ENCODE measurements at regions of chr7 and their contacts with region 1.

Region 1: DNA sequence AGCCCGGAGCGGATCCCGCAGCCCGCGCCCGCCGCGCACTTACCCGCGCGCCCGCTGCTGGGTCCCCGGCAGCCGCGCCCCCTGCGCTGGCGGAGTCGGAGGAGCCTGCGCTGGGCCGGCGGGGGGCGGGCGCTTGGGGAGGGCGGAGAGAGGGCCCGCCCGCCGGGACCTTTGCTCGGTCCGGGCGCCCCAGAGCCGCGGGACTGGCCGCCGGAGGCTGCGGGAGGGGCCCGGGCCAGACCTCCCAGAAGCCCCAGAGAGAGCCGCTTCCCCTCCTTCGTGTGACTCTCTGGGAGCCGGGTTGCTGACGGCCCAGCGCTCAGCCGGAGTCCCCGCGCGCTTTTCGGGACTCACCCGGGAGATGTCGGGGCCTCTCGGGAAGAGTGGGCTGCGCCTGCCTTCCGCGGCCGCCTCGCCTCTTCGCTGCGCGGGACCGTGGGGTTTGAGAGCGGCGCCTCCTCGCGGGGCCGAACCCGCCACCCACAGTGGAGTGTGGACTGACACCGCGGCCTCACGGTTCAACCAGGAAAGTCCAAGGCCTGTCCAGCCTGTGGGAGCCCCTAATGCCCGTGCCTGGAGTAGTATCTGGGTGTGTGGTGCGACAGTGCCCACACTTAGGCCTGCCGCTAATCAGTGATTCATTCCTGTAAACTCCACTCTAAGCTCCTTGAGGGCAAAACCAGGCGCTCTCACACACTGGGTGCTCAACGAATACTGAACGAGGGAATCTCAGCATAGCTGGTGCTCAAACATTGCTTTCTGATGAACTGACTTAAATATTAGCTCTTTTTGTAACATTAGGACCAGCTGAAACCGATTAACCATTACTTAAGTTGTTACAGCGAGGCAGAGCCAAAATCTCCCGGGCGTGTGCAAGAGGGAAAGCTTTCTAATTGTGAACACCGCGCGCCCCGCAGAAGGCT is at the start of gene GSDME:
- DNase-seq: no peak
- ATAC-seq: peak; percentile 85
- H3K4me3 ChIP-seq: peak within 1 kb of the TSS; percentile 88
- H3K27ac ChIP-seq: peak within 1 kb of the TSS; percentile 93
- H3K4me1 ChIP-seq: peaks cover 40% of the 10 kb centered on the region
- H3K27me3 ChIP-seq: no peaks in the 10 kb centered on the region
- CTCF ChIP-seq: no peak
- EP300 ChIP-seq: no peak
- POLR2A ChIP-seq: peak; percentile 60; the same call in 1 of the 2 replicates
- RAD21 ChIP-seq: no peak
- polyA plus RNA-seq, gene GSDME: 62.5 to 83.7 TPM

Region 2: DNA sequence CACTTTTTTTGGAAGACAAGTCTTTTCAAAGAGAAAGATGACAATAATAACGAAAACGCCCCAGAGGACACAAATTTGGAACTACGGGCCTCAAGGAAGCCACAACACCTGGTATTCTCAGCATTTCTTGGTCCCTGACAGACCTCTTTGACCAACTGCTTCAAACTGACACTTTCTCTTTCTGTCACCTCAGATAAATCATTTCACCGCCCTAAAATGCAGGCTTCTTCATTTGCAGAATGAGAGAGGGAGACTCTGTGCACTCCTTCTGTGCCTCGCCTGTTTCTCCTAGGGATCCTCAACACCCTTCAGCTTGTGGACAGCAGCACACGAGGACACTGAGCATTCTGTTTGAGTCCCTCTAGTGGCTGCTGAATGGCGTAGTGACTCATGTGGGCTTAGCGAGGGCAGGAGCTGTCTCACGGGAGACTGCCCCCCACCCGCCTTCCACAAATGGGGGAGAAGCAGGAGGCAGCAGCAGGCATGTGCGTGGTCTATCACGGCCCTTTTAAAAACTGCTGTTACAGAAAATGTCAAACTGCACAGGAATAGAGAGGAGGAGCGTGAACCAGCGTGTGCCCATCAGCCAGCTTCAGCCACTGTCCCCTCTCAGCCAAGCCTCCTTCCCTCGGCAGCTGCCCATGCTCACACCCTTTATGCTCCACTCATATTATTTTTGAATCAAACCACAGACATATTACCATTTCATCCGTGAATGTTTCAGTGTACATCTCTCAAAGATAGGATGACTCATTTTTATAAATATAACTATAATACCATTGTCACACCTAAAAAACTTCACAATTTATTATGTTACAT is 41.7 kb before region 1 on chr7:
- CTCF ChIA-PET with region 1: interaction called, 8 read pairs
- POLR2A ChIA-PET with region 1: interaction called, 3 read pairs
- RAD21 ChIA-PET with region 1: interaction called, 4 read pairs
- SMC1A ChIA-PET with region 1: interaction called, 21 read pairs
- in situ Hi-C with region 1: no loop called
- intact Hi-C with region 1: loop called (anchors 2 kb)
- DNase-seq: peak; percentile 61
- ATAC-seq: peak; percentile 70
- H3K4me3 ChIP-seq: no peak overlapping the region; the same call in 1 of the 2 replicates
- H3K27ac ChIP-seq: peak overlapping the region; percentile 77
- H3K4me1 ChIP-seq: peaks cover 67% of the 10 kb centered on the region
- H3K27me3 ChIP-seq: no peaks in the 10 kb centered on the region
- CTCF ChIP-seq: peak; percentile 50 to 74 (median 55)
- EP300 ChIP-seq: peak; percentile 47 to 74; a peak in 3 of 4 replicates
- POLR2A ChIP-seq: peak; percentile 43; the same call in 1 of the 2 replicates
- RAD21 ChIP-seq: 0 out of 2 replicates have a peak, but pooled peaks have one; percentile 18

Region 3: DNA sequence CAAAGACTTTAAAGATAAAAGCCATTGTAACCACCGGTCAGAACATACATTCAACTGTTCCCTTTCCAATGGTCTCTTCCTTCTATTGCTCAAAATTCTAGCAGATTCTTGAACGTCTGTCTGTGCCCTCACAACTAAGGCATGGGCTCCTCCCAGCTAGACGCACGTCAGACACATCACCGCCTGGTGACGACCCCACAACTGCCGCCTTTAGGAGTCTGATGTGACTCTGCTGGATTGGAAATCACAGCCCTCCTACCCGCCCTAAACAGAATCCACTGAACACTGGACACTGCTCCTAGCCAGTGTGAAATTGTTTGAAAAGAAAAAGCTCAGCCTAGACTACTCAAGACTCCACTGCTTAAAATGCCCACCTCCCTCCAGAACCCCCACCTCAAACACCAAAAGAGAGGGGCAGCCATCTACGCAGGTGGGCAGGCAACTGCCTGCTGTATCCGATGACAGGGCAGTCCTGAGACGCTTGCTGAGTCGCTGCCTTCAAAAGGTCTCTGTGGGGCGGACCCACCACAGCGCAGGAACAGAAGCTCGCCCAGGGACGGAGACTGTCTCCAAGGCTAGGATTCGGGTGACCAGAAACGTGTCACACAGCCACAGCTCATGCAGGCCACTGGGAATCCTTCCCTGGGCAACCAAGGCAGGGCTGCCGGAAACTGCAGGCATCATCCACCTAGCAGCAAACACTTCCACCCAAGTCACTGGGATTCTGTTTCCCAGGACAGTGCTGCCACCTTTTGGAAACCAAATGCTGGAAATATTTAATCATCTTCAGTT is 35.0 kb before region 1 on chr7:
- CTCF ChIA-PET with region 1: interaction called, 6 read pairs
- POLR2A ChIA-PET with region 1: no interaction called
- RAD21 ChIA-PET with region 1: interaction called, 4 read pairs
- SMC1A ChIA-PET with region 1: interaction called, 21 read pairs
- in situ Hi-C with region 1: no loop called
- intact Hi-C with region 1: loop called (anchors 2 kb)
- DNase-seq: no peak
- ATAC-seq: no peak
- H3K4me3 ChIP-seq: no peak overlapping the region
- H3K27ac ChIP-seq: no peak overlapping the region
- H3K4me1 ChIP-seq: peaks cover 59% of the 10 kb centered on the region
- H3K27me3 ChIP-seq: no peaks in the 10 kb centered on the region
- CTCF ChIP-seq: peak in 1 of 3 experiments; percentile 24; a peak in 2 of 6 replicates
- EP300 ChIP-seq: no peak
- POLR2A ChIP-seq: no peak
- RAD21 ChIP-seq: peak; percentile 33; the same call in 1 of the 2 replicates

Region 4: DNA sequence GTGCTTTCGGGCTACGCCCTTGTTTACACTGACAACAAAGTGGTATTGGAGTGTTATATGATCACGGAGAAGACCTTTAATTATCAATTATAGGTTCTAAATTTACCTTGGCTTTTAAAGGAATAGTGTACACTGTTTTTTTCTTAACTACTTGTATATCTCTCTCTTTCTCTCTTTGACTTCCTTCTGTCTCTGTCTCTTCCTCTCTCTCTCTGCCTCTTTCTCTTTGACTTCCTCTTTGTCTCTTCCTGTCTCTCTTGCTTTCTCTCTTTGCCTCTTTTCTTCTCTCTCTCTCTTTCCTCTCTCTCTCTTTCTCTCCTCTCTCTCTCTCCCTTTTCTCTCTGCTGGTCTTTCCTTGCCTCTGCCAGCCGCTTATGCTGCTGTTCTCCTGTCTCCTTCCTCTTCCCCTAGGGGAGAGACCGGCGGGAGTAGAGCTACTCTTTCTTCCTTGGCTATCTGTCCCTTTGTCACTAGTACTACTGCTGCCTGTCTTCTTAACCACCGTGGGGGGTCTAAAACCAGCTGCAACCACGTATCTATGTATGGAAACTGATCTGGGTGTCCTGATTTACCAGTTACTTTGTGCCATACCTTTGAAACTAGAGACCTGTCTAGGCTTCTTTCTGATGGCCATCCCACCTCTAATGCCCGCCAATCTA is 36.5 kb after region 1 on chr7:
- CTCF ChIA-PET with region 1: no interaction called
- POLR2A ChIA-PET with region 1: no interaction called
- RAD21 ChIA-PET with region 1: no interaction called
- SMC1A ChIA-PET with region 1: no interaction called
- in situ Hi-C with region 1: no loop called
- intact Hi-C with region 1: no loop called
- DNase-seq: no peak
- ATAC-seq: no peak
- H3K4me3 ChIP-seq: no peak overlapping the region
- H3K27ac ChIP-seq: no peak overlapping the region
- H3K4me1 ChIP-seq: no peaks in the 10 kb centered on the region
- H3K27me3 ChIP-seq: no peaks in the 10 kb centered on the region
- CTCF ChIP-seq: no peak
- EP300 ChIP-seq: no peak
- POLR2A ChIP-seq: no peak
- RAD21 ChIP-seq: no peak